Prostate gland (tissue), 2 donors: ENCODE measurements at regions of chr14 and their contacts with region 1.

Region 1: DNA sequence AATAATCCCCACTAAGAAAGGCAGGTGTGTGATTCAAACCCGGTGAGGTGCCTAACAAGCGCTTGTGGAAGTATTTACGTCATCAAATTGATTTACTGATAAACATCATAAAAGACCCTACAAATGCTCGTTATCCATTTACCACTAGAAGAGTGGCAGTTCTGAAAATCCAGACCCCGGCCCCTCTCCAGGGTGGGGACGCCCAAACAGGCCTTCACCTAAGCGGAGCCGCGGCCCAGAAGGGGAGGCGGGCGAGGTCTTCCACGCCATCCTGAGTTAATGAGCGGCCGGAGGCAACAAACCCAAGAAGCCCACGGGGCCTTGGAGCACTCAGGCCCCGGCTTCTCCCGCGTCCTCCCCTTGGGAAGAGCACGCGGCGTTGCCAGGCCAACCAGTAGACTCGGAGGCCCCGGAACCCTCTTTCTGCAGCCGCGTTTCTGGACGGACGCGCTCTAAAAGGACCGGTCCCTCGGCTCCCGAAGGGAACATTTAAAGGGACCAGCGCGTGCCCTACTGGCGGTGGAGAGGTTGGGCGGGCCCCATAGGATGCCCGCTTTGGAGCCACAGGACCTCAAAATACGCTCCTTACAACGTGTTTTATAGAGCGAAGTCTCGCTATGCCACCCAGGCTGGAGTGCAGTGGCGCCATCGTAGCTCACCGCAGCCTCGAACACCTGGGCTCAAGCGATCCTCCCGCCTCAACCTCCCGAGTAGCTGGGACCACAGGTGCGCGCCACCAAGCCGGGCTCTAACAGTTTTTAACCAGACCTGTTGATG is 3.5 kb downstream of the PTPN21 start:
- DNase-seq: peak; percentile 75
- H3K4me3 ChIP-seq: peak overlapping the region; percentile 51 to 57
- H3K27ac ChIP-seq: peak overlapping the region; percentile 64 to 76
- H3K4me1 ChIP-seq: peaks cover 11% of the 10 kb centered on the region
- H3K27me3 ChIP-seq: no peaks in the 10 kb centered on the region
- CTCF ChIP-seq: peak; percentile 16 to 74 (median 63)
- POLR2A ChIP-seq: peak; percentile 44

Region 2: DNA sequence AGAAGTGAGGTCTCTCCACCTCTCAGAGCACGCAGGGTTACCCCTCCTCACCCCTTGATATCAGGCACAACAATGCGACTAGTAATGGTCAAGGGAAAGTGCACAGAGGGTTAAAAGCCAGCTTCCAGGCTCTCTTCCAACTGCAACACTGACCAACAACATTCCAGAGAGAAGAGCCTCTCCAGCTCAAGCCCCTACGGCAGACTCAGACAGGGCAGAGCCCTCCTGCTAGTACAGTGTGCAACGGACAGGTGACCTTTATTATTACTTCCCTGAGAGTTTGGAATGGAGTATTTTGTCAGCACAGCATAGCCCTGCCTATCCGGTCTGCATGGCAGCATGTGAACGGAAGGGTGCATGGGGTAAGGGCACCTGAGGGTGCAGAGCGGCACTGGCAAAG is 69.5 kb before region 1 on chr14:
- intact Hi-C with region 1: no loop called
- DNase-seq: no peak
- H3K4me3 ChIP-seq: no peak overlapping the region
- H3K27ac ChIP-seq: no peak overlapping the region
- H3K4me1 ChIP-seq: no peaks in the 10 kb centered on the region
- H3K27me3 ChIP-seq: no peaks in the 10 kb centered on the region
- CTCF ChIP-seq: no peak
- POLR2A ChIP-seq: no peak

Region 3: GRCh38 chr14:88492272-88493089 is 58.8 kb before region 1 on chr14:
- intact Hi-C with region 1: loop called (anchors 2 kb)
- DNase-seq: peak; percentile 78
- H3K4me3 ChIP-seq: no peak overlapping the region
- H3K27ac ChIP-seq: no peak overlapping the region
- H3K4me1 ChIP-seq: no peaks in the 10 kb centered on the region
- H3K27me3 ChIP-seq: no peaks in the 10 kb centered on the region
- CTCF ChIP-seq: peak; percentile 72 to 94 (median 88)
- POLR2A ChIP-seq: no peak